ENCODE measurements at regions of chr9 and their contacts with region 1.

Region 1: GRCh38 chr9:131851414-131851813 is 111.5 kb upstream of the RAPGEF1 start:
- DNase-seq: no peak
- ATAC-seq: no peak

Region 2: GRCh38 chr9:131815971-131816873 is 35.2 kb before region 1 on chr9:
- intact Hi-C with region 1: loop called (anchors 1 kb)
- DNase-seq: no peak
- ATAC-seq: no peak

Measured in sciatic nerve (tissue), 2 donors.